ENCODE measurements at regions of chr13 and their contacts with region 1.

Region 1: GRCh38 chr13:39415008-39415802 is 187.8 kb downstream of the LHFPL6 start:
- DNase-seq: peak; percentile 62
- ATAC-seq: peak; percentile 69 to 79

Region 2: DNA sequence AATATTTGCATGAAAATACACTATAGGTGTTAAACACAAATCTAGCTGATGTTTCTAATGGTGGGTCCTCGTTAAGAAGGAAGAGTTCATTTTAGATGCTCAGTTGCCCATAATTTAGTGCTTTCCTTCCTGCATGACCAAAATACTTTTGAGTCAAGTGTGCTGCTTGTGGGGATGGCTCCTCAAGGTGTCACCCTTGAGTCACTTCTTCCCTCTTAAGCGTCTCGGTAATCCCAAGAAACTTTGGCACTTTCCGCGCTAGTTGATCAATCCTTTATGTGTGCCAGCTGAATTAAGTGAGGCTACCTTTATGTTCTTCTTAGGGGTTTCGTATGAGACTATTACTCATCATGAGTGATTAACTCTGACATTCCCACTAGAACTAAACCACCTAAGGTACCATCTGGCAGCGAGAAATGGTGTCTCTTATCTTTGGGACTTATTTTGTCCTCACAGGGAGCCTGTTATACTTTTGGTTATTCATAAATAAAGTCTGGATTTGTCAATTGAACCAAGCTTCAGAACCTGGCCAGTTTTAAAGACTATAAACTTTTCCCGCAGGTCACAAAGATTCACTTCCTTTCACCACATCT is 270.2 kb before region 1 on chr13:
- intact Hi-C with region 1: loop called in 1 of 2 experiments (anchors 5 kb)
- DNase-seq: peak; percentile 46
- ATAC-seq: peak; percentile 71 to 79

Region 3: DNA sequence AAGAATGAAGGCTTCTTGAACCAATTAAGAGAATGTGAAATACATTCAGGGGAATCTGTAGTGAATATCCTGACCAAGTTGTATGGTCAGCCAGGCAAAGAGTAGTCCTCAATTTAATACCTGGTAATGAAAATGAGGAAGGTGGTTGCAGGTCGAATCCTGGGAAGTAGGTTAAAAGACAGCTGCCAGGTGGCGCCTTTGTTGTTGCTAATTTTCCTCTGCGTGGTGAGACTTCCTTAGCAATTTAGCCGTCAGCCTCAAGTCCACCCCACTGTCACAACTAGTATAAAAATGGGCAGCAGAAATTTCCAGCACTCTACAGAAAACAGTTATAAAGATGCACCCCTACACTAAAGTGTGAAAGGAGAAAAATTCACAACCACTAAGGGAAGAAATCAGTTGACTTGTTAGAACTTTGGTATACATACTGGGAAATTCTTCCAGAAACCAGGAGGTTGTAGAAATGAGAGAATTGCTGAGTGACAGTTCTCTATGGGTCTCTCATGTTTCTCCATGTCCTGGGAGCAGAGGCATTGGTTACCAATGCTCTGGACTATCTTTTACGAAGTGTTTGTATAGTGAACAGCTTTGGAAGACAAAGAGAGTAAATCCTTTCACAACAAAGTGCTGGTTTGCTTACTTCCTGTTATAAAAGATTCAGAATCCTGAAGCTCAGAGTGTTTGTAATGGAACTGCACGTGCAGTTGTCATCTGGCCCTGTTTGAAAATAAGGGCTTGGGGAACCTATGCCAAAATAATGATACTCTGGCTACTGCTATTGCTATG is 141.1 kb before region 1 on chr13:
- intact Hi-C with region 1: loop called in 1 of 2 experiments (anchors 10 kb)
- DNase-seq: no peak
- ATAC-seq: no peak

Region 4: DNA sequence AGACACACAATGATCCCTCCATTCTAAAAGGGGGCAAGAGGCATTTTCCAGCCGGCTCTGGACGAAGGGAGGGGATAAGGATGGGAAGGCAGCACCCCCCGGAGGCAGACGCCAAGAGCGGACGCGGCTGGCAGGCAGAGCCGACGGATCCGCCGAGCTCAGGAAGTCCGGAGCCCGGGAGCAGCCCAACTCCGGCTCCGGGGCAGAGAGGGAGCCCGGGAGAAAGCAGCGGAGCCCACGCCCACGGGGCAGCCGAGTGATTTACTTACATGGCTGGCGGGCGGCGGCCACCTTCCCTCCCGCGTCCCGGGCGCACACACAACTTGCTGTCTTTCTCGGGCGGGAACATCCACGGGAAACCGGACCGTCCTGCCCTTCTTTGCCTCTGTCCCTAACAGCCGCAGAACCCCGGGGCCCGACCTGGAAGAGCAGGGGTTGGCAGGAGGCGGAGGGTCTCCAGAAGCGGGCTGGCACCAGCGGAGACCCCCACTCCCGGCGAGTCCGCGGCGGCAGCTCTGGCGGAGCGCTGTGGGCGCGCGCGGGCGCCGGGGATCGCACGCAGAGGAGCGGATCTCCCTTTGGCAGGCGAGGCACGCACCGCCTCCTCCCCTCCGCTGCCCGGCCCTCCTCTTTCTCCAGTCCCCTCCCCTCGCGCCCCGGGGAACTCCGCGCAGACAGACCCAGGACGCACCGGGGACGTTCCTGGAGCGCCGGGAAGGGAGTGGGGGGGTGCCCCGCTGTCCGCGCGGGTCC is 187.6 kb after region 1 on chr13 and contains the start of gene LHFPL6:
- intact Hi-C with region 1: loop called (anchors 2 to 5 kb)
- DNase-seq: peak; percentile 91
- ATAC-seq: peak; percentile 96 to 99
- total RNA-seq, gene LHFPL6: 58.2 to 67.2 TPM

Measured in left cardiac atrium (tissue), 4 donors.